ENCODE measurements at regions of chr2 and their contacts with region 1.

Region 1: GRCh38 chr2:120669121-120669952 is 66.3 kb upstream of the GLI2 start:
- DNase-seq: peak; percentile 87 to 90
- H3K4me3 ChIP-seq: peak overlapping the region; percentile 27; the same call in 1 of the 2 replicates
- H3K27ac ChIP-seq: peak overlapping the region; percentile 69
- H3K4me1 ChIP-seq: peaks cover 28% of the 10 kb centered on the region
- H3K27me3 ChIP-seq: no peaks in the 10 kb centered on the region
- CTCF ChIP-seq: peak; percentile 76

Region 2: DNA sequence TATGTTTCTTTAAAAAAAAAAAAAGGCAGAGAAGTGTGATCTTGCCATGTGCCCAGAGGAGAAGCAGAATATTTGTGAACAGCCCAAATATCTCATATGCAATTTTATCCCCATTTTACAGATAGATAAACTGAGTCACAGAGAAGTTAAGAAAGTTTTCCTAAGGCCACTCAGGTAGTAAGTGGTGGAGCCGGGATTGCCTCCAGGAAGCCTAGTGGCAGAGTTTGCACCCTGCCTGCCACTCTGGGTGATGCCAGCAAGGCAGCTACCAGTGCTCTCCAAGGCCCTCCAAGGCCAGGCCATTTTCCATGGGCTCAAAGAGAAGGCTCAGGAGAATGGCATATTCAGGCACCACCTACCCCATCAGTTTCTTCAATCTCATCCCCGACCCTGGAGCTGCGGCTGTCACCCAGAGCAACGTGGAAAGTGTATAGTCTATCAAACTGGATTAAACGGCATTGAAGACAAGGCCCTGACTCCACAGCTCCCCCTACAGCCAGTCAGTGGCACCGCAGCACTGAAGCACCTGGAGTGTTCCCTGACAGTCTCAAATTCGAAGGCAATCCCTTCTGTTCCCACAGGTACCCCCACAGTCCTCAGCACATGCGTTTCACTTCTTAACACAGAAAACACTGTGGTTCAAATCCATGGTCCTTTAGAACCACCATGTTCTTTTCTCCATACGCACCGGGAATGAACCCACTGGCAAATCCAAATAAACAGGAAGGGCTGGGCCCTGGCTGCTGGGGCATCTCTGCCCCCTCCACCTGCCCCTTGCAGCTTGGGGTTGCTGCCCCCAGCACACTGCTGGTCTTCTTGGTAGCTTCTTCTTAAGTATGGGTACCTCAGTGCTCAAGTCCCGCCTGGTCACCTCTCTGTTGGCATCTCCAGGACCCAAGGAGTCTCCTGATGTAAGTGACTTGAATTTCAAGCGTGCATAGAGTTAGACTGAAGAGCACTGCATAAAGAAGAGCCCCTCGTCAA is 148.1 kb before region 1 on chr2:
- CTCF ChIA-PET with region 1: no interaction called
- POLR2A ChIA-PET with region 1: interaction called, 3 read pairs
- intact Hi-C with region 1: loop called (anchors 2 kb)
- DNase-seq: peak; percentile 59 to 74
- H3K4me3 ChIP-seq: no peak overlapping the region
- H3K27ac ChIP-seq: no peak overlapping the region
- H3K4me1 ChIP-seq: peaks cover 15% of the 10 kb centered on the region
- H3K27me3 ChIP-seq: no peaks in the 10 kb centered on the region
- CTCF ChIP-seq: peak; percentile 99

Region 3: DNA sequence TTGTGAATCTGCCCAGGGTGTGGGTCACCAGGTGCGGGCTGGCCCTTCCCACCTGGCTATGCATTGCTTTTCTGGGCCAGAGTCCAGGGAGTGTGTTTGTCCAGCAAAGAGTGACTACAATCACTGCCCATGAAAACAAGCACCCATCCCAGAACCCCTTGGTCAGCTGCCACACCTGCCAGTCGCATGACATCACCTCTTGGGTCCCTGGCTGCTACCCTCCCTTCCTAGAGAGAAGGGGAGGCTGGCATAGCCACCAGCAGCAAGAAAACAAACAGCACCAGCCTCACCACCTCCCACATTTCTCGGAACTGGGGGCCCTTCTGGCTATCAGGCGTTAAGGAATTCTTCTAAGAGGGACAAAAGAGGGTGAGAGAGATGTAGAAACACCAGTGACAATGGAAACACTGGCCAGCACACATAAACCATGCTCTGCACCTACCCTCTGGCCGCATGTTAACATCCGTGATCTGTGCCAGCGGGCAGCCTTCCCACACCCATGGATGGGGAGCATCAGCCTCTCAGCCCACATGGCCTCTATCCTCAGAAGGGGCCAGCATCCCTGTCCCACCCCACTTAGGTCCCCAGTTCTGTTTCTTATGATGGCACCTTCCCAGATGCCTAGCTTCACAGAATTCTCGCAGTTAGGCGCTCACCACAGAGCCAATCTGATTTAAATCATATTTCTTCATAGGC is 43.3 kb before region 1 on chr2:
- CTCF ChIA-PET with region 1: no interaction called
- POLR2A ChIA-PET with region 1: no interaction called
- intact Hi-C with region 1: loop called (anchors 1 kb)
- DNase-seq: peak; percentile 86 to 87
- H3K4me3 ChIP-seq: no peak overlapping the region
- H3K27ac ChIP-seq: no peak overlapping the region
- H3K4me1 ChIP-seq: peaks cover 28% of the 10 kb centered on the region
- H3K27me3 ChIP-seq: no peaks in the 10 kb centered on the region
- CTCF ChIP-seq: no peak

Region 4: GRCh38 chr2:120914839-120915521 is 245.6 kb after region 1 on chr2:
- CTCF ChIA-PET with region 1: no interaction called
- POLR2A ChIA-PET with region 1: interaction called, 23 read pairs
- intact Hi-C with region 1: no loop called
- DNase-seq: peak; percentile 46 to 87
- H3K4me3 ChIP-seq: no peak overlapping the region
- H3K27ac ChIP-seq: no peak overlapping the region
- H3K4me1 ChIP-seq: peaks cover 21% of the 10 kb centered on the region
- H3K27me3 ChIP-seq: no peaks in the 10 kb centered on the region
- CTCF ChIP-seq: no peak

Region 5: DNA sequence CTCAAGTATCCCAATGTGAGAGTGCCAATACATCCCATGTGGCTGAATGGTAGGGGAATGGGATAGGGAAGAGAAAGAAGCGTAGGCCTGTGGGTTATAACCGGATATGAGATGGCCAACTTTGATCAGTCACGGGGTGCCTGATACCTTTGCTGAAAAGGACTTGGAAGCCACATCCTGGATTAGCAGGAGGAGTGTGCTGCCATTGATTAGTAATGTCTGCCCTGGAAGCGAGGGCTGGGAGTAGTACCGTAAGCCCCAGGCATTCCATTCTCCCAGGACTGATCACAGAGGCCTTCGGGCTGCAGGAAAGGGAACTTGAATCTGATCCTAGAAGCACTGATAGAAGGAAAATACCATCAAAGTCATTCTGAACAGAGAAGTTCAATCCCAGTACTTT is 397.2 kb after region 1 on chr2:
- CTCF ChIA-PET with region 1: no interaction called
- POLR2A ChIA-PET with region 1: no interaction called
- intact Hi-C with region 1: no loop called
- DNase-seq: no peak
- H3K4me3 ChIP-seq: no peak overlapping the region
- H3K27ac ChIP-seq: no peak overlapping the region
- H3K4me1 ChIP-seq: no peaks in the 10 kb centered on the region
- H3K27me3 ChIP-seq: peaks cover 61% of the 10 kb centered on the region
- CTCF ChIP-seq: no peak

Measured in PC-9 (cell line).